ENCODE measurements at regions of chr3 and their contacts with region 1.

Region 1: DNA sequence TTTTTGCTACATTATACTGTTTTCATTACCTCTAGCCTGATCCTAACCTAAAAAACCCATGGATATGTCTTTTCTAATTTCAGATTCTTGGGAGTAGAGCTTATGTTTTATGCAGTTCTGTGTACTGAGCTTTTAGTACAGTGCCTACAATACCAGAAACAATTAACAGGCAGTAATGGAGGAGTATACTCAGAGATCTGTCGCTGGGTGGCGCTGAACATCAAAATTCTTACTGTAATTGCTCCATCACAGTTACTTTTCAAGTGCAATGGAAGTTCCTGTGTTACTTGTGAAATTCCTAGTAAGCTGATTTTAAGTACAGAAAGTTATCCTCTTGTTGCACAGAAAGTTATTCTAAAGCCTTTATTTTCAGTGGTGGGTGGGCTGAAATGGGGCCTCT is 66.9 kb downstream of the RNF13 start:
- DNase-seq: peak; percentile 44
- H3K4me3 ChIP-seq: no peak overlapping the region
- H3K27ac ChIP-seq: peak overlapping the region in 1 of 2 experiments; percentile 51; a peak in 2 of 4 replicates
- H3K4me1 ChIP-seq: no peaks in the 10 kb centered on the region
- H3K27me3 ChIP-seq: no peaks in the 10 kb centered on the region
- CTCF ChIP-seq: peak; percentile 81
- EP300 ChIP-seq: no peak
- RAD21 ChIP-seq: peak; percentile 88

Region 2: DNA sequence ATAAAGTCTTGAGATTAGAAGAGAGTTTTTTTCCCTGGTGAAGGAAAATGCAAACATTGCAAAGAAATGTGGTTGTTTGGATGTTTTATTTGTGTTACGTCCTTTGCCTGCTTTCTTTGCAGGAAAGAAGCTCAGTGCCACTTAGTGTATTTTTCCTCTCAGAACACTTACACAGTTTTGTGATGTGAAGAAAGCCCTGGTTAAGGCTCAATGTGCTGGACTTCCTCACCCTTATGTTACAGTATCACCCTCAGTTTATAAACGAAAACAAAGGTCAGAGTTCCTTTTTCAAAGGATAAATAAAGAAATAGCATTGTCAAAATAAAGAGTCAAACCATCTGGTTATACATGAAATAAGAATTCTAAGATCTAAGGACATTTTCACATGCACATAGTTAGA is 21.0 kb before region 1 on chr3:
- CTCF ChIA-PET with region 1: interaction called, 11 read pairs
- POLR2A ChIA-PET with region 1: no interaction called
- DNase-seq: no peak
- H3K4me3 ChIP-seq: no peak overlapping the region
- H3K27ac ChIP-seq: no peak overlapping the region
- H3K4me1 ChIP-seq: no peaks in the 10 kb centered on the region; a peak in 1 of 4 replicates
- H3K27me3 ChIP-seq: no peaks in the 10 kb centered on the region
- CTCF ChIP-seq: no peak
- EP300 ChIP-seq: no peak
- RAD21 ChIP-seq: no peak

Region 3: GRCh38 chr3:149894205-149894604 is 14.3 kb after region 1 on chr3:
- CTCF ChIA-PET with region 1: interaction called, 54 read pairs
- POLR2A ChIA-PET with region 1: no interaction called
- DNase-seq: no peak
- H3K4me3 ChIP-seq: no peak overlapping the region
- H3K27ac ChIP-seq: peak overlapping the region; percentile 28 to 43
- H3K4me1 ChIP-seq: peaks cover 25 to 26% of the 10 kb centered on the region in 2 experiments
- H3K27me3 ChIP-seq: no peaks in the 10 kb centered on the region
- CTCF ChIP-seq: no peak
- EP300 ChIP-seq: no peak
- RAD21 ChIP-seq: no peak

Region 4: DNA sequence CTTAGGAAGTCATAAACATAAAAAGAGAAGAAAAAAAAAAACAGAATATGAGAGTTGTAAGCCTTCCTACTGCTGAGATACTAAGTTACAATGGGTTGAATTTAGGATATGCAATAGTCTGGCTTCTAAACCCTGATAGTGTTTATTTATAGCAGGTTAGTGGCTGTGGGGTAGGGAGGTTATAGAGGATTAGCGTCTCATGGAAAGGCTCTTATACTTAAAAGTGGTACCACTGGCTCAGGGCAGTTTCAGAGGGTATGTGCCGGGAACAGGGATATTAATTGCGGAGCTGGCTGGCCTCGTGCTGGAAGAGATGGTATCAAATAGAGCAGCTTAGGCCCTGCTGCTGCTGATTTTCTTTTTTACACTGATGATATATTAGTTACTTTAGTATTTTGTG is 30.1 kb after region 1 on chr3:
- CTCF ChIA-PET with region 1: interaction called, 11 read pairs
- POLR2A ChIA-PET with region 1: no interaction called
- DNase-seq: no peak
- H3K4me3 ChIP-seq: no peak overlapping the region
- H3K27ac ChIP-seq: peak overlapping the region in 1 of 2 experiments; percentile 75; a peak in 2 of 4 replicates
- H3K4me1 ChIP-seq: peaks cover 0 to 11% of the 10 kb centered on the region in 2 experiments; a peak in 2 of 4 replicates
- H3K27me3 ChIP-seq: no peaks in the 10 kb centered on the region
- CTCF ChIP-seq: no peak
- EP300 ChIP-seq: no peak
- RAD21 ChIP-seq: no peak

Region 5: GRCh38 chr3:149958171-149958796 is 78.4 kb after region 1 on chr3:
- CTCF ChIA-PET with region 1: interaction called, 16 read pairs
- POLR2A ChIA-PET with region 1: no interaction called
- DNase-seq: no peak
- H3K4me3 ChIP-seq: no peak overlapping the region
- H3K27ac ChIP-seq: no peak overlapping the region
- H3K4me1 ChIP-seq: peaks cover 19 to 20% of the 10 kb centered on the region in 2 experiments; a peak in 3 of 4 replicates
- H3K27me3 ChIP-seq: no peaks in the 10 kb centered on the region
- CTCF ChIP-seq: no peak
- EP300 ChIP-seq: no peak
- RAD21 ChIP-seq: no peak

Region 6: GRCh38 chr3:150106740-150107428 is 227.0 kb after region 1 on chr3:
- CTCF ChIA-PET with region 1: no interaction called
- POLR2A ChIA-PET with region 1: no interaction called
- DNase-seq: peak; percentile 15
- H3K4me3 ChIP-seq: no peak overlapping the region; a peak in 1 of 4 replicates
- H3K27ac ChIP-seq: peak overlapping the region; percentile 91 to 93
- H3K4me1 ChIP-seq: peaks cover 16 to 24% of the 10 kb centered on the region in 2 experiments
- H3K27me3 ChIP-seq: no peaks in the 10 kb centered on the region
- CTCF ChIP-seq: no peak
- EP300 ChIP-seq: peak; percentile 73 to 97
- RAD21 ChIP-seq: no peak

Region 7: GRCh38 chr3:150183678-150184425 is 304.0 kb after region 1 on chr3:
- CTCF ChIA-PET with region 1: interaction called, 34 read pairs
- POLR2A ChIA-PET with region 1: interaction called, 3 read pairs
- DNase-seq: peak; percentile 63
- H3K4me3 ChIP-seq: peak overlapping the region; percentile 42 to 44
- H3K27ac ChIP-seq: peak overlapping the region; percentile 62 to 73; a peak in 3 of 4 replicates
- H3K4me1 ChIP-seq: peaks cover 5 to 15% of the 10 kb centered on the region in 2 experiments; a peak in 2 of 4 replicates
- H3K27me3 ChIP-seq: no peaks in the 10 kb centered on the region
- CTCF ChIP-seq: peak; percentile 74
- EP300 ChIP-seq: no peak
- RAD21 ChIP-seq: peak; percentile 90